SK-N-SH (cell line): ENCODE measurements at regions of chr5 and their contacts with region 1.

Region 1: DNA sequence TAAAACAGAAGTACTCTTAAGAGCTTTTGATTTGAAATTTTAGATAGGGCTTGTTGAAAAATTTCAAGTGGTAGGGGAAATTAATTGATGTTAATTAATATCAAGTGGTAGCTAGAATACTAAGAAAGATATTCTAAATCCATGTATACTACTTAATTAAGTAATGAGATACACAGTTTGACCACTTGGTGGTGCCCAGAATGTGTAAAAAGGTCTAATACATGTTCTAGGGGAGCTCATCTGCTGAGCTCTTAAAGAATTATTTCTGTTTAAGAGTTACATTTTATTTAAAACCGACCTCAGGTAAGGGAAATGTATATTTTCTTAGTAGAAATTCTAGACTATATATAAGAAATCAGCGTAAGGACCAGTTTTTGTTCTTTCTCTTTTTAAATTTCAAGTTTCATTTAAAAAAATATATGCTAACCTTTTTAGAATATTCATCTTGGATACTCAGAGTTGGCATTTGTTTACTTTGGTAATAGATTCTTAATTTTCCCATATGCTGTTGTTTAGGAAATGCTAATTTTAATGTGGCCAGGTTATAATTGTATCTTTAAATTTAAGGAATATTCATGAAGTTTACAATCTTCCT is 61.5 kb downstream of the LNPEP start:
- DNase-seq: peak; percentile 21
- H3K4me3 ChIP-seq: no peak overlapping the region
- H3K27ac ChIP-seq: no peak overlapping the region
- H3K4me1 ChIP-seq: no peaks in the 10 kb centered on the region
- H3K27me3 ChIP-seq: no peaks in the 10 kb centered on the region
- CTCF ChIP-seq: peak; percentile 74
- EP300 ChIP-seq: no peak
- RAD21 ChIP-seq: peak; percentile 74

Region 2: DNA sequence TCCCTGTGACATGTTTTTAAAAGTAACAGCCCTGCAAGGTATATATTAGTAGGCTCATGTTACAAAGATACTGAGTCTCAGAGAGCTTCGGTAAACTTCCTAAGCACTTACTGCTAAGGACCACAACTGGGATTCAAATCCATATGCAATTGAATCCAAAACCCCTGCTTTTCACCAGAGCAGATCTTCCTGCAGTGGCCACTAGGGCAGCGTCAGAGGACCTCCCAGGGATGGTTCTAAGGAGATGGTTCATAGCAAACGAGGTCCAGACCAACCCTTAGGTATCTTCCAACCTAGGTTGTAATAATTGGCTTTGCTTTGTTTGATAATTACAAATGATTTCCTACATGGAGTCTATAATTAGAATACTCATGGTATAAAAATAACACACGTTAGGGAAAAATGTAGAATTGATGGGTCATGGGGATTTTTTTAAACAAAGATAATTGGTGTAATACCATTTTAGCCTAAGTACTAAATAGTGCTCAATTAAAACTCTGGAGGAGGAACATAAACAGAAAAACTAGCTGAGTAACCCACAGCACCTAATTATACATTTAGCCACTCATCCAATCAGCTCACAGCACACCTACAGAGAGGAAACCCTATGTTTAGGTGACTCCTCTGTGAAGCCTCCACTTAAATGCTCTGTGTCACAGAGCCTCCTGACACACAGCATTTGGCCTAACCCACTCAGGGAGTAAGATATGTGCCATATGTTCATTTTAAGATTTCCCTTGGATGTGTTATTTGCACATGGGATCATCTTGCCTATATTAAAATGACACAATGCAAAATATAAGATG is 345.2 kb before region 1 on chr5:
- CTCF ChIA-PET with region 1: no interaction called
- POLR2A ChIA-PET with region 1: no interaction called
- DNase-seq: peak; percentile 11
- H3K4me3 ChIP-seq: no peak overlapping the region
- H3K27ac ChIP-seq: no peak overlapping the region
- H3K4me1 ChIP-seq: peaks cover 24 to 32% of the 10 kb centered on the region in 2 experiments
- H3K27me3 ChIP-seq: no peaks in the 10 kb centered on the region
- CTCF ChIP-seq: peak; percentile 48
- EP300 ChIP-seq: no peak
- RAD21 ChIP-seq: no peak

Region 3: GRCh38 chr5:96868603-96869371 is 128.6 kb before region 1 on chr5:
- CTCF ChIA-PET with region 1: interaction called, 20 read pairs
- POLR2A ChIA-PET with region 1: no interaction called
- DNase-seq: peak; percentile 32
- H3K4me3 ChIP-seq: no peak overlapping the region; a peak in 1 of 4 replicates
- H3K27ac ChIP-seq: no peak overlapping the region
- H3K4me1 ChIP-seq: no peaks in the 10 kb centered on the region
- H3K27me3 ChIP-seq: no peaks in the 10 kb centered on the region
- CTCF ChIP-seq: peak; percentile 91
- EP300 ChIP-seq: no peak
- RAD21 ChIP-seq: peak; percentile 88

Region 4: DNA sequence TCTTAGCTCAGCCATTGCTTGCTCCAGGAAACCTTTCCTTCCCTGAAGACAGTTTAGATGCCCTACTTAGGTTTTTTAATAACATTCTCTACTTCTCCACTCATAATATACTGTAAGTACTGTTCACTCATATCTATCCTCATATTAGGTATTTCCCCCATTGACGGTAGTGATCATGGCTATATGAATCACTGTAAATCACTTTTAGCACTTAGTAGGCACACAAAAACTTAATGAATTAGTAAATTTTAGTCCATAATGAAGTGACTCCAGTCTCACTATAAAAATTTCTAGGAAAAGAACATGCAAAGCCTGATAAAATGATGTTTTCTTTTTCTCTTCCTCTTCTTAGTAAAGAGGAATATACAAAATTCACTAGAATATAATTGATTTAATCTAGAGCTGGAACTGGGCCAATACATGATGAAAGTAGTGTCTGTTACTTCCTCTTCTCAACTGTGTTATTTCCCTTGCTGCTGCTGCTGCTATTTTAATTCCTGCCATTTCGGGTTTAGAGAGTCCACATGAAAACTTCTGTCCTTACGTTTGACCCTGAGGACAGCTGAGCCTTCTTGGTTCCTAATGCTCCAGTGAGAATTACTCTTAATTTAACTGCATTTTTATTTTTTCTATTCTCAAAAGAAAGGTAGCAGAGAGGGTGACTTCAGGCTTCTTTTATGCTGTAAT is 12.0 kb after region 1 on chr5:
- CTCF ChIA-PET with region 1: interaction called, 18 read pairs
- POLR2A ChIA-PET with region 1: no interaction called
- DNase-seq: peak; percentile 3
- H3K4me3 ChIP-seq: no peak overlapping the region
- H3K27ac ChIP-seq: no peak overlapping the region
- H3K4me1 ChIP-seq: no peaks in the 10 kb centered on the region
- H3K27me3 ChIP-seq: no peaks in the 10 kb centered on the region
- CTCF ChIP-seq: no peak
- EP300 ChIP-seq: no peak
- RAD21 ChIP-seq: no peak

Region 5: DNA sequence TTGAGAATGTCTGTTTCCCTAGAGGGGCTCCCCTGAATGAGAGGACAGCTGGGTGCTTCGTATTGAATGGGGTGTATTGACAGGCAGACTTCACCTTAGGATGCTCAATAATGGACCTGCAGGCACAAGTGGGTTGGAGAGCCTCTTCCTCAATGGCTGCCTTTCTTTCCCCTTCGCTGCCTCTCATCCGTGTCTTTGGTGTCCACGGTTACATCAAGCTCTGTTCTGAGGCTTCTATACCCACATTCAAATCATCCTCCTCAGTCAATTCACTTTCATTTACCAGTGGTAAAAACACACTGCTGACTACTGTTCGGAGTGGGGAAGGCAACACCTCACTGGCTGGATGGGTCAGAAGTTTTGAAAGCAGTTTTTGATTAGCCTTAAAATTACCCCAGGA is 124.5 kb after region 1 on chr5:
- CTCF ChIA-PET with region 1: interaction called, 11 read pairs
- POLR2A ChIA-PET with region 1: no interaction called
- DNase-seq: no peak
- H3K4me3 ChIP-seq: no peak overlapping the region
- H3K27ac ChIP-seq: no peak overlapping the region
- H3K4me1 ChIP-seq: peaks cover 0 to 13% of the 10 kb centered on the region in 2 experiments; a peak in 2 of 4 replicates
- H3K27me3 ChIP-seq: peaks cover 8% of the 10 kb centered on the region; the same call in 1 of the 2 replicates
- CTCF ChIP-seq: no peak
- EP300 ChIP-seq: no peak
- RAD21 ChIP-seq: no peak

Region 6: DNA sequence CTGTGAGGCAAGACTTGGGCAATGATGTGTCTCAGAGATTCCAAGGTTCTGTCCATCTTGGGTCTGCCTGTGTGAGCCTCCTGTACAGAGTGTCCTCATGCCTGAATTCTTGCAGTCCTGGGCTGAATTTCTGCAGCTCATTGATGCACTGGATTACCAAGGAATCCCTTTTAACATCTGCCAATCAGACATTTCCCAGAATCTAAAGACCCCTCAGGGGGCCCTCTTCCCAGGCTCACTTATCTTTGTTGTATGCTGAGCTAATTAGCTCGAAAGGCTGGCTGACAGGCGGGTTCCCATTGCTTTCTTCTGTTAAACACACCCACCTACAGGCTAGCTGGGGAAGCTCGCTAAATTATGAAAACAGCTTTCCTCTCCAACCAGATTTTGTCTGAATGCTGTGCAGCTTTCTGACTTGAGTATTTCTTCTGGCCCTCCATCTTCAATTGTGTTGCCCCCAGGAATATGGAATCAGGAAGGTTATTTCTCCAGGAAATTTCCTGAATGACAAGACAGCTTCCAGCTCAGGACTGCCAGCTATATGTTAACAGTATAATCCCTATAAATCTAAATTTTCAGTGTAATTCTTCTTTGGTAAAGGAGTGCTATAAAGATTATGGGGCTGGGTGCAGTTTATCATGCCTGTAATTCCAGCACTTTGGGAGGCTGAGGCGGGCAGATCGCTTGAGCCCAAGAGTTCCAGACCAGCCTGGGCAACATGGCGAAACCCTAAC is 145.3 kb after region 1 on chr5 and contains the start of gene LIX1:
- CTCF ChIA-PET with region 1: interaction called, 59 read pairs
- POLR2A ChIA-PET with region 1: no interaction called
- DNase-seq: peak; percentile 68
- H3K4me3 ChIP-seq: no peak within 1 kb of the TSS
- H3K27ac ChIP-seq: no peak within 1 kb of the TSS
- H3K4me1 ChIP-seq: peaks cover 0 to 3% of the 10 kb centered on the region in 2 experiments; a peak in 2 of 4 replicates
- H3K27me3 ChIP-seq: no peaks in the 10 kb centered on the region
- CTCF ChIP-seq: peak; percentile 67
- EP300 ChIP-seq: peak in 1 of 2 experiments; percentile 56; a peak in 1 of 4 replicates
- RAD21 ChIP-seq: peak; percentile 88
- polyA plus RNA-seq, gene LIX1: 0.02 TPM in 1 of 2 replicates, not detected in the other

Region 7: DNA sequence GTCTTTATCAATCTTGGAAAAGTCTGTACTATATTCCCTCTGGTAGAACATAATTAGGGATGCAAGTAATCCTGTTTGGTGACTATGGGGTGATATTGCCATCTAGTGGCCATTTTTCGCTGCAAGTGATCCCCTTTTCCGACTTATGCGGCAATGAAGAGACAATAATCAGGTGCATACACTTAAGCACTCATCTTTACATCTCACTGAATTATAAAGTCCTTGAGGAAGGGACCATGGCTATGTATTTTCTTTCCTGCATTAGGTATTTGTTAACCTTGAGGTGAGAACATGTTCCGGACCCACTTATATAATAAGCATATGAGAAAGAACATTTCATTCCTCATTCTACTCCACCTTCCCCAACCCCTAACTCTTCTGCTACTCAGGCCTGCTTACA is 164.7 kb after region 1 on chr5:
- CTCF ChIA-PET with region 1: interaction called, 67 read pairs
- POLR2A ChIA-PET with region 1: no interaction called
- DNase-seq: peak; percentile 45
- H3K4me3 ChIP-seq: no peak overlapping the region; a peak in 1 of 4 replicates
- H3K27ac ChIP-seq: no peak overlapping the region
- H3K4me1 ChIP-seq: no peaks in the 10 kb centered on the region
- H3K27me3 ChIP-seq: no peaks in the 10 kb centered on the region
- CTCF ChIP-seq: peak; percentile 96
- EP300 ChIP-seq: no peak
- RAD21 ChIP-seq: peak; percentile 89